AG04450 (cell line): ENCODE measurements at regions of chr13 and their contacts with region 1.

Region 1: GRCh38 chr13:110819203-110820014 is 95.5 kb downstream of the ANKRD10 start:
- DNase-seq: no peak
- H3K4me3 ChIP-seq: no peak overlapping the region
- H3K27ac ChIP-seq: no peak overlapping the region
- H3K27me3 ChIP-seq: peaks cover 9% of the 10 kb centered on the region
- CTCF ChIP-seq: peak; percentile 97

Region 2: GRCh38 chr13:110593430-110594130 is 225.8 kb before region 1 on chr13:
- CTCF ChIA-PET with region 1: interaction called, 10 read pairs
- POLR2A ChIA-PET with region 1: no interaction called
- DNase-seq: no peak
- H3K4me3 ChIP-seq: no peak overlapping the region
- H3K27ac ChIP-seq: no peak overlapping the region
- H3K27me3 ChIP-seq: peaks cover 2% of the 10 kb centered on the region
- CTCF ChIP-seq: peak; percentile 54

Region 3: GRCh38 chr13:110808138-110808537 is 11.3 kb before region 1 on chr13:
- CTCF ChIA-PET with region 1: interaction called, 11 read pairs
- POLR2A ChIA-PET with region 1: no interaction called
- DNase-seq: no peak
- H3K4me3 ChIP-seq: no peak overlapping the region
- H3K27ac ChIP-seq: no peak overlapping the region
- H3K27me3 ChIP-seq: peaks cover 32% of the 10 kb centered on the region
- CTCF ChIP-seq: no peak

Region 4: DNA sequence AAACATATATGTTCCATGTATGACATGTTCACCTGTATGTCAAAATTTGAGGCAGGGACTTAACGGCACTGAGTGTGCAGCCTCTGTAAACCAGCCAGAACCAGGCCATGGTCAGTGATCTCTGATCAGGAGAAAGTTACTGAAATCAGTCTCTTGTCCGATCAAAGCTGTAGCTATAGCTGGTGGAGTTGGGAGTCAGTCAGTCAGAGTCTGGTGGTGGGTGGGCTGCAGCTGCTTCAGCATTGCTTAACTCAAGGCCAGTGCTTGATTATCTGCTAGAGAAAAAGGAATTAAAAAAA is 17.1 kb after region 1 on chr13:
- CTCF ChIA-PET with region 1: no interaction called
- POLR2A ChIA-PET with region 1: no interaction called
- DNase-seq: no peak
- H3K4me3 ChIP-seq: no peak overlapping the region
- H3K27ac ChIP-seq: no peak overlapping the region
- H3K27me3 ChIP-seq: peaks cover 30% of the 10 kb centered on the region
- CTCF ChIP-seq: no peak

Region 5: DNA sequence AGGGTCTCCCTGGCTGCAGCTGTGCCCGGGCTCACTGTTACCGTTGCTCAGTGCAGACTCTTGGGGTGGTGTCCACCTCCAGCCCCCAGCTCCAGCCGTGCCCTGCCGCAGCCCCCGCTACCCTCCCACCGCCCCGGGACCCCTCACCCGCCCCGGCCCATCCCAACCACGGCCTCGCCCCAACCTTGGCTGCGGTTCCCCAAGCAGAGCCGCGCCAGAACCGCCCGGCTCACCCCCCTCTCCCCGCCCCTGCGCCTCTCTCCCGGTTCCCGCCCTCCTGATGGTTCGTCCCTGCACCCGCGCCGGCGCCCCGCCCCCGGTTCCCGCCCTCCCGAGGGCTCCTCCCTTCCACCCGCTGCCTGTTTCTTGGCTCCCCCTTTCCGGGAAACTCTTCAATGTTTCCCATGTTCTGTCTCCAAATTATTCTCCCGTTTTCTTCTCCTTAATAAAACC is 55.1 kb after region 1 on chr13:
- CTCF ChIA-PET with region 1: no interaction called
- POLR2A ChIA-PET with region 1: no interaction called
- DNase-seq: no peak
- H3K4me3 ChIP-seq: peak overlapping the region; percentile 58
- H3K27ac ChIP-seq: no peak overlapping the region
- H3K27me3 ChIP-seq: no peaks in the 10 kb centered on the region
- CTCF ChIP-seq: no peak

Region 6: GRCh38 chr13:110957181-110957884 is 137.9 kb after region 1 on chr13:
- CTCF ChIA-PET with region 1: no interaction called
- POLR2A ChIA-PET with region 1: no interaction called
- DNase-seq: no peak
- H3K4me3 ChIP-seq: no peak overlapping the region
- H3K27ac ChIP-seq: peak overlapping the region; percentile 34
- H3K27me3 ChIP-seq: no peaks in the 10 kb centered on the region
- CTCF ChIP-seq: peak; percentile 45